GM10248 (cell line): ENCODE measurements at regions of chr7 and their contacts with region 1.

Region 1: GRCh38 chr7:144454256-144455039 is 51.0 kb upstream of the NOBOX start:
- DNase-seq: no peak
- CTCF ChIP-seq: no peak

Region 2: GRCh38 chr7:144407266-144407931 is 47.0 kb before region 1 on chr7:
- CTCF ChIA-PET with region 1: no interaction called
- POLR2A ChIA-PET with region 1: no interaction called
- DNase-seq: no peak
- CTCF ChIP-seq: no peak

Region 3: GRCh38 chr7:144437370-144438191 is 16.9 kb before region 1 on chr7:
- CTCF ChIA-PET with region 1: interaction called, 13 read pairs
- POLR2A ChIA-PET with region 1: no interaction called
- DNase-seq: peak; percentile 37
- CTCF ChIP-seq: peak; percentile 50

Region 4: DNA sequence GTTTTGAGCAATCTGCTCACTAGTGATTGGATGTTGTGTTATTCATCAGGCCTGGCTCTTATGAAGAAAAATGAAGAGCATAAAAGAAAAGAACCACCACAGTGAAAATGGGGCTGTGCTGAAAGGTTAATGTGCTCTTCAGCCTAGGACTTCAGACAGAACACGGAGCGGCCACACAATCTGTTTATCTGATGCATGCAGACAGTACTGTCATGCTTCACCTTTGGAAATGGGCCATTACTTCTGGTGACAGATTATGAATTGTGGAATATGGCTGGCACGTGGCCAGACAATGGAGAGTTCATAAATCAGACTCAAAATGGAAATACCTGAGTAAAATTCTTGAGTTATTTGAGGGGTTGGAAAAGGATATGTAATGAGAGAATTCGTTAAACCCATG is 35.1 kb after region 1 on chr7:
- CTCF ChIA-PET with region 1: no interaction called
- POLR2A ChIA-PET with region 1: no interaction called
- DNase-seq: no peak
- CTCF ChIP-seq: no peak